ENCODE measurements at regions of chr10 and their contacts with region 1.

Region 1: GRCh38 chr10:35218339-35218955 is 91.8 kb downstream of the CREM start:
- DNase-seq: peak; percentile 65
- H3K4me3 ChIP-seq: no peak overlapping the region
- H3K27ac ChIP-seq: no peak overlapping the region
- H3K4me1 ChIP-seq: no peaks in the 10 kb centered on the region
- H3K27me3 ChIP-seq: no peaks in the 10 kb centered on the region
- CTCF ChIP-seq: peak; percentile 74 to 77

Region 2: GRCh38 chr10:35040760-35041501 is 177.5 kb before region 1 on chr10:
- CTCF ChIA-PET with region 1: no interaction called
- dilution Hi-C with region 1: no loop called
- in situ Hi-C with region 1: no loop called
- intact Hi-C with region 1: no loop called
- DNase-seq: peak; percentile 46
- H3K4me3 ChIP-seq: no peak overlapping the region
- H3K27ac ChIP-seq: peak overlapping the region; percentile 5
- H3K4me1 ChIP-seq: peaks cover 20% of the 10 kb centered on the region
- H3K27me3 ChIP-seq: no peaks in the 10 kb centered on the region
- CTCF ChIP-seq: no peak

Region 3: GRCh38 chr10:35090162-35090954 is 128.1 kb before region 1 on chr10 and contains the start of gene CUL2:
- CTCF ChIA-PET with region 1: no interaction called
- dilution Hi-C with region 1: no loop called
- in situ Hi-C with region 1: no loop called
- intact Hi-C with region 1: no loop called
- DNase-seq: peak; percentile 93
- H3K4me3 ChIP-seq: peak within 1 kb of the TSS; percentile 76 to 85 (median 83)
- H3K27ac ChIP-seq: peak within 1 kb of the TSS; percentile 62
- H3K4me1 ChIP-seq: peaks cover 3% of the 10 kb centered on the region
- H3K27me3 ChIP-seq: no peaks in the 10 kb centered on the region
- CTCF ChIP-seq: no peak
- total RNA-seq, gene CUL2: 29.7 to 42.9 TPM

Region 4: DNA sequence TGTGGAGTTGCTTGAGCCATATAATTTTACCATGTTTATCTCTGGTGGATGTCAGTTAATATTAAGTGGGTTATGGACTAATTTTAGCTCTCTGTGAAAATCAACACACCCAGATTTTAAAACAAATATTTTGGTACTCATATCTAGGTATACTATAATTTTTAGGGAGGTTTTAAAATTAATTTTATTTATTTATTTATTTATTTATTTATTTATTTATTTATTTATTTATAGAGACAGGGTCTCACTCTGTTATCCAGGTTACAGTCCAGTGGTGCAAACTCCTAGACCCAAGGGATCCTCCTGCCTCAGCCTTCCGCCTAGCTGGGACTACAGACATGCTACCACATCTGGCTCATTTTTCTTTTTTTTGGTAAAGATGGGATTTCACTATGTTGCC is 99.1 kb before region 1 on chr10:
- CTCF ChIA-PET with region 1: interaction called, 4 read pairs
- dilution Hi-C with region 1: no loop called
- in situ Hi-C with region 1: loop called (anchors 5 kb)
- intact Hi-C with region 1: loop called (anchors 1 kb)
- DNase-seq: no peak
- H3K4me3 ChIP-seq: no peak overlapping the region
- H3K27ac ChIP-seq: no peak overlapping the region
- H3K4me1 ChIP-seq: peaks cover 6% of the 10 kb centered on the region
- H3K27me3 ChIP-seq: no peaks in the 10 kb centered on the region
- CTCF ChIP-seq: no peak

Region 5: DNA sequence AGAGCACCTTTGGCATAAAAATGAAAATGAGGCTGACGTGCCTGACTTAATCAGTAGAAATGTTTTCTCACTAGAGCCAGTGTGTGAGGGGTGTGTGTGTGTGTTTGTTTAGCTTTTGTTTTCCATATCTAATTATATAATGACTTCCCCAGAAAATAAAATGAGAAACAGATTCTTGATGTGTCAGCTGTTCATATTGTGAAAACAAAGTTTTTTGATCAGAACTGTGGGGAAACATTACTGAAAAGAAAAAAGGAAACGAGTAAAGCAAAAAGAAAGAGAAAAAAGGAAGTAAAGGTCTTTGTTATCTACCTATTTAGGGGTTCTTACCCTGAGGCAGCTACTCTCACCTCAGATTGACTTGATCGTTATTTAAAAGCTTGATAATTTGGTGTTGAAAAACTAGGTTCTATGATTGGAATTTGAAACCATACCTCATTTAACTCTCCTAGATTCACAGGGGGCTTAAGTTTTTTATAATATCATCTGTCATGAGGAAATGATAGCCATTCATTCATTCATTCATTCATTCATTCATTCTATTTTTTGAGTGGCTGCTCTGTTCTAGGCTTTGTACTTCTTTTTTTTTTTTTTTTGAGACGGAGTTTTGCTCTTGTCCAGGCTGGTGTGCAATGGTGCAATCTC is 33.8 kb before region 1 on chr10:
- CTCF ChIA-PET with region 1: no interaction called
- dilution Hi-C with region 1: loop called (anchors 5 kb)
- in situ Hi-C with region 1: no loop called
- intact Hi-C with region 1: no loop called
- DNase-seq: no peak
- H3K4me3 ChIP-seq: no peak overlapping the region
- H3K27ac ChIP-seq: no peak overlapping the region
- H3K4me1 ChIP-seq: no peaks in the 10 kb centered on the region
- H3K27me3 ChIP-seq: no peaks in the 10 kb centered on the region
- CTCF ChIP-seq: no peak

Region 6: GRCh38 chr10:35195361-35196306 is 22.8 kb before region 1 on chr10:
- CTCF ChIA-PET with region 1: no interaction called
- dilution Hi-C with region 1: no loop called
- in situ Hi-C with region 1: no loop called
- intact Hi-C with region 1: no loop called
- DNase-seq: peak; percentile 90
- H3K4me3 ChIP-seq: peak overlapping the region; percentile 32 to 50 (median 43)
- H3K27ac ChIP-seq: peak overlapping the region; percentile 69
- H3K4me1 ChIP-seq: peaks cover 18% of the 10 kb centered on the region
- H3K27me3 ChIP-seq: no peaks in the 10 kb centered on the region
- CTCF ChIP-seq: peak; percentile 84 to 90

Measured in mammary epithelial cell (primary cell).